ENCODE measurements at regions of chr12 and their contacts with region 1.

Region 1: GRCh38 chr12:91467686-91468085 is 285.1 kb upstream of the DCN start:
- DNase-seq: no peak
- ATAC-seq: no peak
- H3K4me3 ChIP-seq: no peak overlapping the region
- H3K27ac ChIP-seq: no peak overlapping the region
- H3K4me1 ChIP-seq: no peaks in the 10 kb centered on the region
- H3K27me3 ChIP-seq: no peaks in the 10 kb centered on the region
- CTCF ChIP-seq: no peak
- POLR2A ChIP-seq: no peak

Region 2: DNA sequence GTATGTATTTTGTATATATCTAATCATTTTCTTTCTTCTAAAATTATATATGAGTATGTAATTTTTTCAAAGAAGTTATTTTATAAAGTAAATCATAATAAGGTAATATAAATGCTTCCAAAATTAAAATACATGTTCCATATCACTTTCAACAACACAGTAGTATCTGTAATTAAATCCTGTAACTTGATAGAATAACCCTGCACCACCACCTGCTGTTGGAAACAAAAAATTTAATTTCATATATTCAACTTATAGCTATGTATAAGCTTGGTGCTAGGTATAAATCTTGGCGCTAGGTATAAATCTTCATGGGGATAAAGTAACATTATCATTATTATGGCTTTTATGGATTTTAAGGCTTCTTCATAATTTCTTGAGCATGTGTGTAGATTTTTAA is 135.4 kb before region 1 on chr12:
- intact Hi-C with region 1: no loop called
- DNase-seq: no peak
- ATAC-seq: no peak
- H3K4me3 ChIP-seq: no peak overlapping the region
- H3K27ac ChIP-seq: no peak overlapping the region
- H3K4me1 ChIP-seq: peaks cover 0 to 10% (median 0%) of the 10 kb centered on the region in 12 donors
- H3K27me3 ChIP-seq: no peaks in the 10 kb centered on the region
- CTCF ChIP-seq: peak in 4 of 12 donors; percentile 26 to 45 (median 32)
- POLR2A ChIP-seq: no peak

Region 3: GRCh38 chr12:91507754-91508153 is 40.1 kb after region 1 on chr12:
- intact Hi-C with region 1: loop called in 1 of 10 experiments (anchors 2 kb)
- DNase-seq: no peak
- ATAC-seq: peak in 2 of 4 donors; percentile 38 to 49
- H3K4me3 ChIP-seq: no peak overlapping the region
- H3K27ac ChIP-seq: no peak overlapping the region
- H3K4me1 ChIP-seq: peaks cover 0 to 14% (median 0%) of the 10 kb centered on the region in 12 donors
- H3K27me3 ChIP-seq: no peaks in the 10 kb centered on the region
- CTCF ChIP-seq: no peak
- POLR2A ChIP-seq: no peak